Colonic mucosa (tissue), 4 donors: ENCODE measurements at regions of chr12 and their contacts with region 1.

Region 1: GRCh38 chr12:5796171-5796958 is 148.7 kb downstream of the ANO2 start:
- DNase-seq: peak; percentile 26
- H3K4me3 ChIP-seq: no peak overlapping the region
- H3K27ac ChIP-seq: no peak overlapping the region
- H3K4me1 ChIP-seq: no peaks in the 10 kb centered on the region
- H3K27me3 ChIP-seq: no peaks in the 10 kb centered on the region
- CTCF ChIP-seq: peak; percentile 78

Region 2: GRCh38 chr12:5171701-5172100 is 624.7 kb before region 1 on chr12:
- intact Hi-C with region 1: loop called (anchors 5 kb)
- DNase-seq: peak; percentile 50
- H3K4me3 ChIP-seq: no peak overlapping the region
- H3K27ac ChIP-seq: no peak overlapping the region
- H3K4me1 ChIP-seq: no peaks in the 10 kb centered on the region
- H3K27me3 ChIP-seq: no peaks in the 10 kb centered on the region
- CTCF ChIP-seq: peak; percentile 25

Region 3: DNA sequence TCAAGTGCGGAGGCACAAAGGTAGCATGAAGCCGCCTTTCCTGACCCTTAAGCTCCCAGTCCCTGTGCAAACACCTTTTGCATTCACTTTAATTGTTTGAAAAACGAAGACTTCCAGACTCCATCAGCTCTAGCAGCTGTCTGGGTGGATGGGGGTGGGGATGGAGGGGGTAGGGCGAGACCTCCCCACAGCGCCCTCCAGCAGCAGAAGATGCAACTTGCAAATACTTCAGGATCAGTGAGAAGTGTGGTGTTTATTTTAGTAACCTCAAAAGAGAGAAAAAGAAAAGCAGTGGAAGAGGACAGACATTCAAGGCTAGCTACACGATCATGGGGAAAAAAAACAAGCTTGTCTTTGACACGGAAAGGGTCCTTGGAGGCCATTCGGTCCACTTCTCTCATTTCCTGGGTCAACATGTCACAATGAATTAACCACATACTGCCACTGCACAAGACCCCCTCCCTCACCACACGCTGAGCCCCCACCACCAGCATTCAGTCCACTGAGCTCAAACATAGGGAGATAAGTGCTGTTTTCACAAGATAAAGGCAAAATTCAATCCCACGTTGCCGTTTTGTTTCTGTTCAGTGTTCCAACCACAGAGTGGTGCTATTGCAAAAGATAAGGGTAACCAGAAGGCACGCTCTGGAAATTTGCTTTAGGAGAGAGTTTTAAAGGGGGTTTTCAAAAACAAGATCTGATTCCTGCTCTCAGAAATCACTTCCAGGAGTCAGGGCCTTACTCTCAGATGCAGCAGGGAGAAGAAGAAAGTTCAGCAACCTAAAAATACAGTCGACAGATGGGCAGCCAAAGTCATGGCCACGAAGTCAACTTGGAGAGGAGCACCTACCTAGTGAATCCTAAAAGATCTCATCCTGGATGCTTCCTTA is 367.8 kb before region 1 on chr12:
- intact Hi-C with region 1: loop called (anchors 5 kb)
- DNase-seq: no peak
- H3K4me3 ChIP-seq: no peak overlapping the region
- H3K27ac ChIP-seq: no peak overlapping the region
- H3K4me1 ChIP-seq: no peaks in the 10 kb centered on the region
- H3K27me3 ChIP-seq: peaks cover 31% of the 10 kb centered on the region
- CTCF ChIP-seq: peak; percentile 19

Region 4: GRCh38 chr12:5511644-5512600 is 284.4 kb before region 1 on chr12:
- intact Hi-C with region 1: no loop called
- DNase-seq: peak; percentile 52
- H3K4me3 ChIP-seq: no peak overlapping the region
- H3K27ac ChIP-seq: no peak overlapping the region
- H3K4me1 ChIP-seq: no peaks in the 10 kb centered on the region
- H3K27me3 ChIP-seq: no peaks in the 10 kb centered on the region
- CTCF ChIP-seq: peak; percentile 36